Ascending aorta (tissue), 2 donors: ENCODE measurements at regions of chr1 and their contacts with region 1.

Region 1: DNA sequence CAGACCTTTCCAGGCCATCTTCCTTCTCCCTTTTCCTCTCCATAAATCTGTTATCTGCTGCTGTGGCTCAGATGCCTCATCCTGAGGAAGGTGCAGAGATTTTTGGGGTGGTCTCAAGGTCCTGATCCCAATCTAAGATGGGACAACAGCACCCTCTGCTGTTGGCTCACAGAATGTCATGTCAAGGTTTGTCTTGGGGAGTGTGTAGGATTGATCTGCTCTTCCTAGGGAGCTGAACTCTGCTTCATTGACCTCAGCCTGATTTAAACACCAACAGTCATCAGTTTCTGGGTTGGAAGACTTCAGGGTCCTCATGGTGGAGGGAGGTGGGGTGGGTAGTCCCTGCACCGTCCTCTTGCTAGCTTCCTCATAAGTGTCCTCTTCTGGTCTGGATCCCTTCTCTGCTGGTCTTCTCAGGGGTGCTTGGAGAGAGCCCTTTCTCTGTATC is 62.8 kb upstream of the LAX1 start:
- DNase-seq: peak in 1 of 2 donors; percentile 77
- H3K4me3 ChIP-seq: no peak overlapping the region
- H3K27ac ChIP-seq: no peak overlapping the region
- H3K4me1 ChIP-seq: no peaks in the 10 kb centered on the region
- H3K27me3 ChIP-seq: no peaks in the 10 kb centered on the region
- CTCF ChIP-seq: peak; percentile 75 to 91 (median 88)

Region 2: GRCh38 chr1:203504397-203505250 is 197.5 kb before region 1 on chr1:
- intact Hi-C with region 1: loop called (anchors 1 kb)
- DNase-seq: peak in 1 of 2 donors; percentile 92
- H3K4me3 ChIP-seq: no peak overlapping the region
- H3K27ac ChIP-seq: no peak overlapping the region
- H3K4me1 ChIP-seq: peaks cover 0 to 13% of the 10 kb centered on the region in 2 donors
- H3K27me3 ChIP-seq: no peaks in the 10 kb centered on the region
- CTCF ChIP-seq: peak; percentile 75 to 87 (median 84)

Region 3: GRCh38 chr1:203663294-203663693 is 38.9 kb before region 1 on chr1:
- intact Hi-C with region 1: no loop called
- DNase-seq: no peak
- H3K4me3 ChIP-seq: no peak overlapping the region
- H3K27ac ChIP-seq: peak overlapping the region; percentile 4 to 48
- H3K4me1 ChIP-seq: peaks cover 14 to 45% of the 10 kb centered on the region in 2 donors
- H3K27me3 ChIP-seq: no peaks in the 10 kb centered on the region
- CTCF ChIP-seq: no peak